Spleen (tissue), 13 donors: ENCODE measurements at regions of chr15 and their contacts with region 1.

Region 1: GRCh38 chr15:36883713-36884517 is 216.4 kb downstream of the MEIS2 start:
- DNase-seq: peak; percentile 88
- H3K4me3 ChIP-seq: peak overlapping the region in 5 of 8 donors; percentile 5 to 48 (median 24)
- H3K27ac ChIP-seq: no peak overlapping the region
- H3K4me1 ChIP-seq: peaks cover 0 to 39% (median 16%) of the 10 kb centered on the region in 6 donors
- H3K27me3 ChIP-seq: peaks cover 8 to 100% (median 86%) of the 10 kb centered on the region in 7 donors
- CTCF ChIP-seq: peak in 10 of 11 experiments; percentile 24 to 80 (median 72)
- POLR2A ChIP-seq: no peak

Region 2: DNA sequence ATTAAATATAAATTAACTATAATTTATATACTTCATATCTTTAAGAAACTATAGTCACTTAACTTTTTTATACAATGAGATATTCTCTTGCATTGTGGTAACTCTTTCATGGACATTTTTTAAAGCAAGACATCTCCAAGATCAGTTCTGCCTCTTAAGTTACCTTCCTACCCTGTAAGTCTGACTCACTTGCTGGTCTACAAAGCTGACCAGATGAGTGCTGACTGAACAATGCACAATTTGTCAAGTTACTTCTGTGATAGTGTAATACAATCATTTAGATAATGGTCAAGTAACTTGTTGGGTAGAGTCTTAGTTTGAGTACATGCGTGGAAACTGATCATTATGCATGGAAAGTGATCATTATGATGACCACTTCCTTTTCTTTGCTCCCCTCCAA is 70.6 kb after region 1 on chr15:
- intact Hi-C with region 1: no loop called
- DNase-seq: no peak
- H3K4me3 ChIP-seq: no peak overlapping the region
- H3K27ac ChIP-seq: no peak overlapping the region
- H3K4me1 ChIP-seq: no peaks in the 10 kb centered on the region
- H3K27me3 ChIP-seq: no peaks in the 10 kb centered on the region
- CTCF ChIP-seq: no peak
- POLR2A ChIP-seq: no peak

Region 3: DNA sequence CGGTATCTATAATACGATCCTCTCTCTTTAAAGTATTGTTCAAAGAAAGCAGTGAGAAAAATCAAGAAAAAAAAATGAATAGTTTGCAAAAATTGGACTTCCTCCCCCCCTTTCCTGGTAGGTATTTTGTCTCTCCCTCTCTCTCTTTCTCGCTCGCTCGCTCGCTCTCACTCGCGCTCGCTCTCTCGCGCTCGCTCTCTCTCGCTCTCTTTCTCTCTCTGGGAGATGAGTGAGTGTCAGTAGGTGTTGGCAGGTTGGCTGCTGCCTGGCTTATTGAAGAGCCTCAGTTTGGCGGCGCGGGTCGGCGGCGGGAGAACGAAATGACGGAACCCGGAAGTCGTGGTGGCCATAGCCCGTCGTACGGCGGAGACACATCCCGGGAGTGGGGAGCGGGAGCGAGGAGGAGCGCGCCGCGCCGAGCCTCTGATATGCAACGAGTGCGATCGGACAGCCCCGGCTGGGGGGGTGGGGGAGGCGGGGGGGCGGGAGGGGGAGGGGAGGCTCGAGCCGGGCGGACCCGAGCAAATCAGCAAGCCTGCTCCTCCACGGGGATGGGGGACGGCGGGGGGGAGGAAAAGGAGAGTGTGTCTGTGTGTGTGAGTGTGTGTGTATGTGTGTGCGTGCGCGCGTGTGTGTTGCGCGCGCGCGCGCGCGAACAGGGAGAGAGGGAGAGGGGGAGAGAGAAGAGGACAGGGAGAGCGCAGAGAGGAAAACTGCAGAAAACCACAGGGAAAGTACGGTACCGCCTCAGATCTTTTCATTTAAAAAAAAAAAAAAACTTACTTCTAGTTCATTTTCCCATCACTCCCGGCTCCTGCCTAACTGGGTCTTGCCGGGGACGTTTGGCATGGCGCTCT is 216.4 kb after region 1 on chr15 and contains the start of gene MEIS2:
- intact Hi-C with region 1: loop called (anchors 10 kb)
- DNase-seq: peak; percentile 89
- H3K4me3 ChIP-seq: peak within 1 kb of the TSS; percentile 56 to 81 (median 66)
- H3K27ac ChIP-seq: peak within 1 kb of the TSS; percentile 77 to 94 (median 90)
- H3K4me1 ChIP-seq: peaks cover 3 to 75% (median 25%) of the 10 kb centered on the region in 6 donors
- H3K27me3 ChIP-seq: peaks cover 0 to 100% (median 25%) of the 10 kb centered on the region in 7 donors
- CTCF ChIP-seq: no peak
- POLR2A ChIP-seq: peak in 1 of 3 donors; percentile 39
- total RNA-seq, gene MEIS2: 18.2 to 57.2 (median 27.7) TPM